ENCODE measurements at regions of chr1 and their contacts with region 1.

Region 1: DNA sequence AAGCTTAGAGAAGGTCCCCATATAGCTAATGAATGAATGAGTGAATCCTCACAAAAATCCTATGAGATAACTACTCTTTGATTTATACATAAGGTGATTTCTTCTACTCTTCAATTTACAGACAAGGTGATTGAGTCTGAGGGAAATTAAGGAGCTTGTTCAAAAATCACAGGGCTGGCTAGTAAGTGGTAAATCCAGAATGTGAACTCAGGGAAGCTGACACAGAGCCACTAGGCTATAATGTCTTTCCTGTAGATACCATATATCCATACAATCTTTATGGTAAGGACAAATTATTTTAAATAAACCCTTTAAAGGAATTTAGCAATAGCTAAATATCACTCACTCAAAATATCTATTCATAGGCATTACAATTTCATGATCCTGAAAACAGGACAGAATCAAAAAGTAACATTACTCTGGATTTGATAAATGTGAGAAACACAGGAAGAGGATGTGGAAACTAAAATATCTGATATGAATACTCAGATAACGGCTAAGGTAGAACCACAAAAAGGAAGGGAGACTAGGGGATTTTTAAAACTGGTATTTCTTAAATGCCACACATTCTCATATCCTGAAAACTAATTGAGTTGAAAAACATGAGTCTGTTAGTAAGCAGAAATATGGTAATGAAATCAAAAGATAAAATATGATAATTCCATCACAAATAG is 108.2 kb downstream of the NBPF12 start:
- DNase-seq: peak; percentile 33
- H3K4me3 ChIP-seq: peak overlapping the region; percentile 56
- H3K27ac ChIP-seq: peak overlapping the region; percentile 99
- H3K4me1 ChIP-seq: peaks cover 69% of the 10 kb centered on the region
- CTCF ChIP-seq: no peak

Region 2: GRCh38 chr1:147084273-147085096 is 38.2 kb after region 1 on chr1:
- CTCF ChIA-PET with region 1: no interaction called
- POLR2A ChIA-PET with region 1: interaction called, 79 read pairs
- intact Hi-C with region 1: loop called (anchors 1 kb)
- DNase-seq: peak; percentile 92
- H3K4me3 ChIP-seq: peak overlapping the region; percentile 70
- H3K27ac ChIP-seq: peak overlapping the region; percentile 74
- H3K4me1 ChIP-seq: peaks cover 21% of the 10 kb centered on the region
- CTCF ChIP-seq: no peak

Region 3: DNA sequence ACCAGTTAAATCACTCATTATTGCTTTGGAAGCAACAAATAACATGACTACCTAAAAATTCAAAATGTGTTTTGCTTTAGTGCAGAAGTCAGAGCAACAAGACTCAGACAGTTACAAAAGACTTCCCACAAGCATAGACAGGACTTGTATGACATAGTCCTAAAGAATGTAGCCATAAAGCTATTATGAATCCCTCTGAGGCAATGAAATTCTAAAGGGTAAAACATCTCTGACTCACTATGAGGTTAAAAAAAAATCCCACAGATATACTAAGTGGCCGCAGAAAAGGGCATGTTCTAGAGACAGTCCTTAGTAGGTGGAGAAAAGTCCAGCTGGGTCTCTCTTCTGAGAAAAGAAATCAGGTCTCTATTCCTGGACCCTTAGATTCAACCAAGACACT is 121.0 kb after region 1 on chr1:
- CTCF ChIA-PET with region 1: no interaction called
- POLR2A ChIA-PET with region 1: interaction called, 10 read pairs
- intact Hi-C with region 1: no loop called
- DNase-seq: no peak
- H3K4me3 ChIP-seq: no peak overlapping the region
- H3K27ac ChIP-seq: no peak overlapping the region
- H3K4me1 ChIP-seq: peaks cover 19% of the 10 kb centered on the region
- CTCF ChIP-seq: no peak

Measured in OCI-LY7 (cell line).